ENCODE measurements at regions of chr19 and their contacts with region 1.

Region 1: GRCh38 chr19:48993175-48994034 is at the starts of genes GYS1 and RUVBL2:
- DNase-seq: peak; percentile 99
- ATAC-seq: peak; percentile 90
- H3K4me3 Mint-ChIP-seq: peak within 1 kb of the TSS; percentile 92
- H3K27ac Mint-ChIP-seq: peak within 1 kb of the TSS; percentile 98
- H3K4me1 Mint-ChIP-seq: peaks cover 27% of the 10 kb centered on the region
- H3K27me3 Mint-ChIP-seq: no peaks in the 10 kb centered on the region
- total RNA-seq, gene GYS1: 58.0 to 63.1 TPM
- total RNA-seq, gene RUVBL2: 71.3 to 76.1 TPM

Region 2: DNA sequence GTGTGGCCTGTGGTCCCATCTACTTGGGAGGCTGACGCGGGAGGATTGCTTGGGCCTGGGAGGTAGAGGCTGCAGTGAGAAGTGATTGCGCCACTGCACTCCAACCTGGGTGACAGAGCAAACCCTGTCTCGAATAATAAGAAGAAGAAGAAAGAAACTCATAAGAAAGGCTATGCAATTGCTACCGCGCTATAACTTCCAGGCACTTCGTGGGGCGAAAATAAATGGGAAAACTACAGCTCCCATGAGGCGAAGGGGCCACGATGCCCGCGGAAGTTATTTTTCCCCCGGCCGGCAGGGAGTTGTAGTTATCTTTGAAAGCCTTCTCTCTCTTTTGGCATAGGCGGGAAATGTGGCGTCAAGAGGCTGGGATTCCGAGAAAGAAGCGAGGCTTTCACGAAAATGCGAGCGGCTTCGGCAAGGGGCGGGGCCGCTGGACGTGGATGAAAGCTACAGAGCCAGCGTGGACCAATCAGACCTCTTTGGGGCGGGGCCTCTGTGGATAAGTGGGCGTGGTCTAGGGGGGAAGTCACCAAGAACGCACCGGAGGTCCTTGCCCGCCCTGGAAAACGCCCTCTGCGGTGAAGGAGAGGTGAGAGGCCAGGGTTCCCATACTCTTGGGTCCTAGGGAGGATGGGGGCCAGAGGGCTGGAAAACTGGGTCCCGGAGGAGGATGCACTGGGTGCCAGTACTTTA is 93.5 kb before region 1 on chr19 and contains the start of gene NUCB1:
- POLR2A ChIA-PET with region 1: interaction called, 11 read pairs
- DNase-seq: peak; percentile 99
- ATAC-seq: peak; percentile 89
- H3K4me3 Mint-ChIP-seq: peak within 1 kb of the TSS; percentile 96
- H3K27ac Mint-ChIP-seq: peak within 1 kb of the TSS; percentile 96
- H3K4me1 Mint-ChIP-seq: peaks cover 24% of the 10 kb centered on the region
- H3K27me3 Mint-ChIP-seq: peaks cover 16% of the 10 kb centered on the region
- total RNA-seq, gene NUCB1: 203 to 214 TPM

Region 3: DNA sequence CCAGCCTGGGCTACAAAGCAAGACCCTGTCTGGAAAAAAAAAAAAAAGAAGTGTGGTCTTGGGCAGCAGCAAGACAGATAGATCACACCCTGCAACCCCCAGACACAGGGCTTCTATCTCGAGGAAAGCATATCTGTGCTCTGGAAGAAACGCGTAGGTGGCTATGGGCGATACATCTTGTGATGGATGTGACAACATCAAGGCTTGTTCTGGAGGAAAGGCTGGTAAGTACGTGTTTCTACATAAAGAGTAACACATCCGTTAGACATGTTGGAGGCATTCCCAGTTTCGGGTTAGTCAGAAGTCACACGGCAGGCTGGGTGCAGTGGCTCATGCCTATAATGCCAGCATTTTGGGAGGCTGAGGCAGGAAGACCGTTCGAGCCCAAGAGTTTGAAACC is 66.5 kb before region 1 on chr19:
- POLR2A ChIA-PET with region 1: no interaction called
- DNase-seq: no peak
- ATAC-seq: peak; percentile 28
- H3K4me3 Mint-ChIP-seq: peak overlapping the region; percentile 35
- H3K27ac Mint-ChIP-seq: peak overlapping the region; percentile 16
- H3K4me1 Mint-ChIP-seq: peaks cover 5% of the 10 kb centered on the region
- H3K27me3 Mint-ChIP-seq: peaks cover 4% of the 10 kb centered on the region

Region 4: DNA sequence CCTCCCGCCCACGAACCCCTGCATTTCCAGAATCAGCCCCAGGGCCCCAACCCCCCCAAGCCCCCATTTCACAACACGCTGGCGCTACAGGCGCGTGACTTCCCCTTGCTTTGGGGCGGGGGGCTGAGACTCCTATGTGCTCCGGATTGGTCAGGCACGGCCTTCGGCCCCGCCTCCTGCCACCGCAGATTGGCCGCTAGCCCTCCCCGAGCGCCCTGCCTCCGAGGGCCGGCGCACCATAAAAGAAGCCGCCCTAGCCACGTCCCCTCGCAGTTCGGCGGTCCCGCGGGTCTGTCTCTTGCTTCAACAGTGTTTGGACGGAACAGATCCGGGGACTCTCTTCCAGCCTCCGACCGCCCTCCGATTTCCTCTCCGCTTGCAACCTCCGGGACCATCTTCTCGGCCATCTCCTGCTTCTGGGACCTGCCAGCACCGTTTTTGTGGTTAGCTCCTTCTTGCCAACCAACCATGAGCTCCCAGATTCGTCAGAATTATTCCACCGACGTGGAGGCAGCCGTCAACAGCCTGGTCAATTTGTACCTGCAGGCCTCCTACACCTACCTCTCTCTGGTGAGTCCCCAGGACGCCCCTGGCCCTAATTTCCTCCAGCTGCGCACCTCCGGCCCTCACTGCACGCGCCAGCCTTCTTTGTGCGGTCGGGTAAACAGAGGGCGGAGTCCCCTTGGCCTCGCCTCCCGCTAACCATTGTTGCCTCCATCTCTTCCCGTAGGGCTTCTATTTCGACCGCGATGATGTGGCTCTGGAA is 28.2 kb before region 1 on chr19 and contains the start of gene FTL:
- POLR2A ChIA-PET with region 1: interaction called, 16 read pairs
- DNase-seq: peak; percentile 93
- ATAC-seq: peak; percentile 71
- H3K4me3 Mint-ChIP-seq: peak within 1 kb of the TSS; percentile 87
- H3K27ac Mint-ChIP-seq: peak within 1 kb of the TSS; percentile 92
- H3K4me1 Mint-ChIP-seq: peaks cover 49% of the 10 kb centered on the region
- H3K27me3 Mint-ChIP-seq: no peaks in the 10 kb centered on the region
- total RNA-seq, gene FTL: 1,232 to 1,343 TPM

Region 5: GRCh38 chr19:48975947-48976847 is 17.2 kb before region 1 on chr19:
- POLR2A ChIA-PET with region 1: interaction called, 21 read pairs
- DNase-seq: no peak
- ATAC-seq: peak; percentile 54
- H3K4me3 Mint-ChIP-seq: no peak overlapping the region
- H3K27ac Mint-ChIP-seq: no peak overlapping the region
- H3K4me1 Mint-ChIP-seq: peaks cover 14% of the 10 kb centered on the region
- H3K27me3 Mint-ChIP-seq: no peaks in the 10 kb centered on the region

Measured in activated naive CD8-positive, alpha-beta T cell treated with anti-CD3 and anti-CD28 coated beads, Interleukin-2, amount 10 ng/mL, durations not matched to agents 7 days and 5 days (primary cell).